ENCODE measurements at regions of chr5 and their contacts with region 1.

Region 1: DNA sequence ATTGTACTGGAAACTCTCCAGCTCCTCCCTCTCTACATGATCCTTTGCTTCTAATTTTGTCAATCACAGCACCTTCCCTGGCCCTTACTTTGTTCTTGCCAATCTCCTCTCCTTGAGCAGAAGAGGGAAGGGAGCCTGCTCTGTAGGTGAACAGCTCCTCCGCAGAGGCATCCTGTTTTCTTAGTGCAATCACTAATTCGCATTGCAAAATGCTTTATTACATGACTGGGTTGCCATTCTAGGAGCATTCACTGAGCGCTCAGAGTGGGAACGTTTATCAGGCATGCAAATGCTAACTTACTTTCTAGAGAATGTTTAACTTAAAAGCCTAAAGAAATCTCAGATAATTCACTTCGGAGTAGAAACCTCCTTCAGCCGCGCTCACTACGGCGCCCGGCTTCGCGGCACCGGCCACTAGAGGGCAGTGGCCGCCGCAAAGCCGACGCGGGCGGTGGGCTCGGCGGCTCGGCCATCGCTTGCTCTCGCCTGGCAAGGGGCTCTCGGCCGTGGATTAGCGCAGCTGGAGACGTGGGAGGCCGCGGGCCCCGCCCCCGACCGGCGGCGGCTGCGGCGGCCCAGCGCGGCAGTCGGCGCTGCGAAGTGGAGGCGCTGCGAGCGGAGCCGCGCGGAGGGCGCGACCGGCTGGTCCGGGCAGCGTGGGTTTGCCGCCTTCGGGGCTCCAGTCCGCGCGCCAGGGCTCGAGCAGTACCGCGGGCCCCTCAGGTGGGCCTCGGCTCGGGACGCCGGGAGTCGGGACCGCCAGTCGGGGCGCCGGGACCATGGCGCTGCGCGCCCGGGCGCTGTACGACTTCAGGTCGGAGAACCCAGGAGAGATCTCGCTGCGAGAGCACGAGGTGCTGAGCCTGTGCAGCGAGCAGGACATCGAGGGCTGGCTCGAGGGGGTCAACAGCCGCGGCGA is at the start of gene SNX18:
- DNase-seq: peak; percentile 86
- H3K4me3 Mint-ChIP-seq: peak within 1 kb of the TSS; percentile 57
- H3K27ac Mint-ChIP-seq: no peak within 1 kb of the TSS
- H3K4me1 Mint-ChIP-seq: peaks cover 18% of the 10 kb centered on the region
- H3K27me3 Mint-ChIP-seq: no peaks in the 10 kb centered on the region
- CTCF ChIP-seq: peak; percentile 98
- total RNA-seq, gene SNX18: 8.7 and 10.0 TPM in 2 replicates

Region 2: GRCh38 chr5:54243473-54244080 is 273.9 kb before region 1 on chr5:
- CTCF ChIA-PET with region 1: interaction called, 3 read pairs
- POLR2A ChIA-PET with region 1: interaction called, 3 read pairs
- intact Hi-C with region 1: loop called (anchors 1 kb)
- DNase-seq: peak; percentile 57
- H3K4me3 Mint-ChIP-seq: no peak overlapping the region
- H3K27ac Mint-ChIP-seq: no peak overlapping the region
- H3K4me1 Mint-ChIP-seq: no peaks in the 10 kb centered on the region
- H3K27me3 Mint-ChIP-seq: no peaks in the 10 kb centered on the region
- CTCF ChIP-seq: peak; percentile 86

Region 3: DNA sequence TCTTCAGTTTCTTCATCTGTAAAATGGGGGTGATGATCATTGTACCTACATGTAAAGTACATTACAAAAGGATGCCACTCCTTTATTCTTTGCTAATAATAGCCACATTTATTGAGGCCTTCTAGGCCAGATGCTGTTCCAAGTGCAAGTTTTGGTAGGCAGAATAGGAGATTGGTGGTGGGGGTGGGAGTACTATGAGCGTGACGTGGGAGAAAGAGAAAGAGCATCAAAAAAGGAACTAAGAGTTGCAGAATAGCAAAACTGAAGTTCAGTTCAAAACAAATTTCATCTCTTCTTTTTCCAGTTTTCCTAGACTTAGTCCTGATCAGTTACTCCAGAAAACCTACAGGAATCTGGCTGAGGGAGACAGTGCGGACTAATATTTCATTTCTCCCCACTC is 174.2 kb after region 1 on chr5:
- CTCF ChIA-PET with region 1: no interaction called
- POLR2A ChIA-PET with region 1: no interaction called
- intact Hi-C with region 1: no loop called
- DNase-seq: no peak
- H3K4me3 Mint-ChIP-seq: no peak overlapping the region
- H3K27ac Mint-ChIP-seq: no peak overlapping the region
- H3K4me1 Mint-ChIP-seq: no peaks in the 10 kb centered on the region
- H3K27me3 Mint-ChIP-seq: no peaks in the 10 kb centered on the region
- CTCF ChIP-seq: no peak

Region 4: DNA sequence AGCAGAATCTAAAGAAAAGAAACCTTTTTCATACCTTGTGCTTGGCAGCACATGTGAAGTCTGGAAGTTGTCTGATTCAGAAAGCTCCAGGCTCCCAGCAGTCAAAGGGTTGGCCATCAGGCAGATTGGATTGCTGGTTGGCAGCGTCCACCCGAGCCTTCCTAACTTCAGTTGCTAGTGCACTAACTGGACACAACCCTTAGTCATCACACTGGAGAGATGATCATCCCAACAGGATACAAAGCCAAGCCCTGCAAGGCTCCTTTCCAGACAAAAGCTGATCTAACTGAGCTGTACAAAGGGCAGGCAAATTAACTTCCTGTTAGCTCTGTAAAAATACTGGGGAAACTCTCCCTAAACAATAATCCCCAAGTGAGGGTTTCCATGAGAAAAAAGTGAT is 185.7 kb after region 1 on chr5:
- CTCF ChIA-PET with region 1: no interaction called
- POLR2A ChIA-PET with region 1: no interaction called
- intact Hi-C with region 1: loop called (anchors 5 kb)
- DNase-seq: peak; percentile 46
- H3K4me3 Mint-ChIP-seq: no peak overlapping the region
- H3K27ac Mint-ChIP-seq: no peak overlapping the region
- H3K4me1 Mint-ChIP-seq: peaks cover 12% of the 10 kb centered on the region
- H3K27me3 Mint-ChIP-seq: peaks cover 15% of the 10 kb centered on the region
- CTCF ChIP-seq: no peak

Region 5: DNA sequence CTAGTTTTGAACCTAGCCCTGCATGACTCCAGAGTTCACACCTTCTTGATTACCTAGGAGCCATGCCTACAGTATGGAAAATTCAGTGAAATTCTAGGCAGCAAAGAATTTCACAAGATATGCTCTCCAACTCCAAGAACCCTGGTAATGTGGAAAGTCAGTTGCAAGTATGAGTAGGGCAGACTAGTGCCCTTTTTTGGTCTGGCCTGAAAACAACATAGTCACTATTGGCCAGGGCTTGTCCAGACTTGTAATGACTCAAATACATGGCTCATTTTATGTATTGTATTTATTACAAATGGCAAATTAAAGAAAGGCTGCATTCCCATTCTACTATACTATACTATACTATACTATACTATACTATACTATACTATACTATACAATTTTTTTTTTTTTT is 307.6 kb after region 1 on chr5:
- CTCF ChIA-PET with region 1: interaction called, 13 read pairs
- POLR2A ChIA-PET with region 1: no interaction called
- intact Hi-C with region 1: no loop called
- DNase-seq: peak; percentile 58
- H3K4me3 Mint-ChIP-seq: no peak overlapping the region
- H3K27ac Mint-ChIP-seq: peak overlapping the region; percentile 49
- H3K4me1 Mint-ChIP-seq: no peaks in the 10 kb centered on the region
- H3K27me3 Mint-ChIP-seq: no peaks in the 10 kb centered on the region
- CTCF ChIP-seq: no peak

Region 6: GRCh38 chr5:54852007-54852406 is 334.6 kb after region 1 on chr5:
- CTCF ChIA-PET with region 1: interaction called, 28 read pairs
- POLR2A ChIA-PET with region 1: interaction called, 4 read pairs
- intact Hi-C with region 1: no loop called
- DNase-seq: no peak
- H3K4me3 Mint-ChIP-seq: no peak overlapping the region
- H3K27ac Mint-ChIP-seq: no peak overlapping the region
- H3K4me1 Mint-ChIP-seq: no peaks in the 10 kb centered on the region
- H3K27me3 Mint-ChIP-seq: no peaks in the 10 kb centered on the region
- CTCF ChIP-seq: no peak

Region 7: DNA sequence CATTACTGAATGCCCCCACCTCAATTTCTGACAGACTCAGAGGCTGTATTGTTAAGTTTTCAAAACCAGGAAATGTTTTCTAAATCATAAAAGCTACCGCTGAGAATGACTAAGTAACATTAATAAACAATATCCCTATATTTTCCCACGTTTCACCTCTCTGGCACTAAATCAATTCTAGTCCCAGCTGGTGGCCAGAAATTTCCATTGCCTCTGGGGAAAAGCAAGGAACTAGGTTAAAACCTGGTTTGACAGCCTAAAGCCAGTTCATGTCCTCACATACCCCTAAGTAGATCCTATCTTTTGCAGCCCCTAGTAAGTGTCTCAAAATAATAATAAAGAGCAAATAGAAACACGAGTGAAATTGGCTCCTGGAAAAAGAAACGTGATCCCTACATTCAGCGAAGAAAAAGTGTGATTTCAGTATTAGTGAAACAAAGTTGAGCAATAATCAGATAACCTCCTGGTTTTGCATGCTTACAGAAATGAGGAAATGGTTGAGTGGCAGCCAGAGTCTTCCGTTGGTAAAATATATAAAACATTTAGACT is 357.0 kb after region 1 on chr5:
- CTCF ChIA-PET with region 1: interaction called, 31 read pairs
- POLR2A ChIA-PET with region 1: no interaction called
- intact Hi-C with region 1: no loop called
- DNase-seq: peak; percentile 80
- H3K4me3 Mint-ChIP-seq: peak overlapping the region; percentile 61
- H3K27ac Mint-ChIP-seq: peak overlapping the region; percentile 83
- H3K4me1 Mint-ChIP-seq: peaks cover 28% of the 10 kb centered on the region
- H3K27me3 Mint-ChIP-seq: no peaks in the 10 kb centered on the region
- CTCF ChIP-seq: no peak

Region 8: DNA sequence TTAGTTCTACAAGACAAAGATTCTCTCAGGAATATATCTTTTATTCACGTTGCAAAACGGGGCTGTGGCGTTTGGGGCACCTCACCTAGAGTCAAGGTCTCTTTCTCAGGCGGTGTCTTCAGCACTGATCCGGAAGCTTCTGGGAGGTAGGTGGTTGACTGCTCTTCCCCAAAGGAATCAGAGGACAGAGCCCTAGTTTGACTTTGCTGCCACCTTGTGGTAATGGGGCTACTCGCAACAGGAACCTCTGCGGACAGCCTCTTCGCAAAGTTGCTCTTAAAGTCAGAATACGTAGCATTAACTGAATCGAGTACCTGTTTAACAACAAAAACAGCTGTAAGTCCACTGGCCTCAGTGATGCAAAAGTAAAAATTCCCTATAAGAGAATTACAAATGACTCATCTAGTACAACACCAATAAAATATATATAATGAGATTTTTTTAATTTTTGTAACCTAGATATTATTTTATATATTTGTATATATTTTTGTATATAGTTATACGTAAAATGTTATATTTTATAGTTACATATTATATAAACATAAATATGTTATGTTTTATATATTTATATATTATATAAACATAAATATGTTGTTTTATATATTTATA is 629.2 kb after region 1 on chr5:
- CTCF ChIA-PET with region 1: interaction called, 6 read pairs
- POLR2A ChIA-PET with region 1: no interaction called
- intact Hi-C with region 1: loop called (anchors 10 kb)
- DNase-seq: peak; percentile 90
- H3K4me3 Mint-ChIP-seq: no peak overlapping the region
- H3K27ac Mint-ChIP-seq: no peak overlapping the region
- H3K4me1 Mint-ChIP-seq: no peaks in the 10 kb centered on the region
- H3K27me3 Mint-ChIP-seq: peaks cover 63% of the 10 kb centered on the region
- CTCF ChIP-seq: peak; percentile 89

Measured in MCF 10A (cell line).